ENCODE measurements at regions of chr11 and their contacts with region 1.

Region 1: DNA sequence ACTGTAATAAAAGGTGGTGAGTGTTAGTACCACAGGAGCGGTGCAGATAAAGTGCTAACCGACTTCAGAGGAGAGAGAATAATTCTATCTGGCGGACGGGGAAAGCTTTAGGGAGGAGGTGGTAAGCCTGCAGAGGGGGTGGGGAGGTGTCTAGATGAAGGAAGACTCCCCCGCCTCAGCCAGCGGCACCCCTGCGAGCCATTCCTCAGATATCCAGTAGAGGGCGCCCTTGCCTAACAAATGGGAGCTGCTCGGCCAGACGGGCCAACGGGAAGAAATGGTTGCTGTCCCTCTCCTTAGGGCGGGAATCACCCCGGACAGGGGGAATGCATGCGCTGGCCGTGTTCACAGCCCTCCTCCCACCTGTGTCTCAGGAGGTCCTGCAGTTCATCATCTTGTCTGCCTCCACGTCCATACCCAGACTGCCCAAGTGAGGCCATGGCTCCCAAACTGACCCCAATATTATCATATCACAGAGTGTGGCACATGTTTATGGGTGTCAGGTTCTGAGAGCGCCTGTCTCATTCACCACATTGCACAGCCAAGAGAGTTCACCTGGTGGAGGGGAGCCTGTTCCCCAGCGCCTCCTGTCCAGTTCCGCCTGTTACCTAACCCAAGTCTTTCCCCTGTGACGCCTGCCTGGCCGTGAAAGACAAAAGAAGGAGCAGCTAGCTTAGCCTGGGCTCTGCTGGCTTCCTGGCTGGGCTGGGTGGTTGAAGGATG is 85.5 kb downstream of the ST3GAL4 start:
- DNase-seq: peak; percentile 84
- H3K4me3 Mint-ChIP-seq: no peak overlapping the region
- H3K27ac Mint-ChIP-seq: no peak overlapping the region
- H3K4me1 Mint-ChIP-seq: peaks cover 5% of the 10 kb centered on the region
- H3K27me3 Mint-ChIP-seq: peaks cover 6% of the 10 kb centered on the region

Region 2: GRCh38 chr11:126303623-126304456 is 137.1 kb before region 1 on chr11 and contains the start of gene DCPS:
- CTCF ChIA-PET with region 1: no interaction called
- intact Hi-C with region 1: no loop called
- DNase-seq: peak; percentile 86
- H3K4me3 Mint-ChIP-seq: peak within 1 kb of the TSS; percentile 95
- H3K27ac Mint-ChIP-seq: peak within 1 kb of the TSS; percentile 97
- H3K4me1 Mint-ChIP-seq: peaks cover 35% of the 10 kb centered on the region
- H3K27me3 Mint-ChIP-seq: no peaks in the 10 kb centered on the region
- total RNA-seq, gene DCPS: 34.9 to 39.5 TPM

Region 3: GRCh38 chr11:126465573-126466188 is 24.7 kb after region 1 on chr11:
- CTCF ChIA-PET with region 1: interaction called, 11 read pairs
- intact Hi-C with region 1: no loop called
- DNase-seq: peak; percentile 78
- H3K4me3 Mint-ChIP-seq: peak overlapping the region; percentile 16
- H3K27ac Mint-ChIP-seq: peak overlapping the region; percentile 43
- H3K4me1 Mint-ChIP-seq: peaks cover 18% of the 10 kb centered on the region
- H3K27me3 Mint-ChIP-seq: no peaks in the 10 kb centered on the region

Region 4: GRCh38 chr11:126607374-126607773 is 166.4 kb after region 1 on chr11:
- CTCF ChIA-PET with region 1: no interaction called
- intact Hi-C with region 1: loop called (anchors 5 kb)
- DNase-seq: peak; percentile 32
- H3K4me3 Mint-ChIP-seq: no peak overlapping the region
- H3K27ac Mint-ChIP-seq: no peak overlapping the region
- H3K4me1 Mint-ChIP-seq: no peaks in the 10 kb centered on the region
- H3K27me3 Mint-ChIP-seq: peaks cover 29% of the 10 kb centered on the region

Region 5: GRCh38 chr11:126716456-126717083 is 275.6 kb after region 1 on chr11:
- CTCF ChIA-PET with region 1: no interaction called
- intact Hi-C with region 1: loop called (anchors 5 kb)
- DNase-seq: peak; percentile 53
- H3K4me3 Mint-ChIP-seq: no peak overlapping the region
- H3K27ac Mint-ChIP-seq: no peak overlapping the region
- H3K4me1 Mint-ChIP-seq: no peaks in the 10 kb centered on the region
- H3K27me3 Mint-ChIP-seq: peaks cover 28% of the 10 kb centered on the region

Region 6: DNA sequence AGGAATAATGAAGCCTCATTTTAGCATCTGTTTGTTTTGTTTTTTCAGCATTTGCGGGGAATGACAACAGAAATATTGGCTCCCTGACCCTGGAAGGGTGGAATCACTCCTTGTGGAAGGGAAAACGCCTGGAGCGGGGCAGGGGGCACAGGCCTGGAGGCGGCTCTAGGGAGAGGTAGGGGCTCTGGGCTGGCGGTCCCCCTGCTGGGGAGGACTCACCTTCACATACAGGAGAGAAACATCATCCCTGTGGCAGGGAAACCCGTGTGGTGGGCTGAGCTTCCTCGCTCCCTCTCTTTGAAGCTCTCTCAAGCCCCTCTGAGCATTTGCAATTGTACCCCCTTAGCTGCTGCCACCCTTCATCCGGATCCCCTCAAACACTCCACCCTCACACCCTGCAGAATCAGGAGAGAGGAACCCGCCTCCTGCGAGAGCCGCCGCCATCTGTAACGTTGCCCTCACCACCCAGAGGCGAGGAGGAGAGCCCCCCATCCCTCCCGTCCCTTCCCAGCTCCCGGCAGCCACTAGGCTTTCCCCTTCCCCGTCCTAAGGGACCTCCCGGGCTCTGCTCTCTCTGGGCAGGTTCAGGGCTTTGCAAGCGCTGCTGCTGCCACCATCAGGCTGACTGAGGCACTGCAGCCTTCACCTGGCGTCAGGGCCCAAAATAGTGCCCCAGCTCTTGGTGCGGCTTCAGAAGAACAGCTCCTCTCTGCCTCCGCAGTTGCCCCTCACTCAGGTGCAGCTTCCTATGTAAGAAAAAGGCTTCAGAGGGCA is 549.2 kb after region 1 on chr11:
- CTCF ChIA-PET with region 1: interaction called, 3 read pairs
- intact Hi-C with region 1: loop called (anchors 1 kb)
- DNase-seq: peak; percentile 67
- H3K4me3 Mint-ChIP-seq: no peak overlapping the region
- H3K27ac Mint-ChIP-seq: no peak overlapping the region
- H3K4me1 Mint-ChIP-seq: no peaks in the 10 kb centered on the region
- H3K27me3 Mint-ChIP-seq: peaks cover 14% of the 10 kb centered on the region

Region 7: DNA sequence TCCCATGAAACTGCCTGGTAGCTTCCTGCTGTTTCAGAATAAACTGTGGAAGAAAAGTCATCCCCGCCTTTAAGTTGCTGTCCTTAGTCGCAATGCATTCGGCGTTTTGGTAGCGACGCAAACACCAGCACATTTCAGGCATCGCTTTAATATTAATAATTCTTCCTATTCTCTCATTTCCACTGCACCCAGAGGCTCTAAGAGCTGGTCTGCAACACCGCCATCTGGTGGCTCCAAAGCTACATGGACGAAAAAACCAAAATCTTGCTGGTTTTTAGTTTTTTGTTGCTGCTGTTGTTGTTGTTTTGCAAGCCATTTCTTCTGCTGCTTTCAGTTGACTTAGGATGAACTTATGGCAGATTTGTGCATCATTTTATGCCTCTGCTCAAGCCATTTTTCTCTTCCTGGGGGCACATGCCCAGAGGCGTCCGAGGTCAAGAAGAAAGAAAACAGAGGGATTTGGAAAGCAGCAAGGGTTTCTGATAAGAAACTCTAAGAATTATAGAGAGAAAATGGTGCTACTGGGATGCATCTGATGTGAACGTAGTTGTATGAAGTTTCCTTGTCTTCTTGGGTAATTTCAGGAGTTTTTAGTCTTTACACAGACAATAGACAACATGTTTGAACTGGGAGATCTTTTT is 905.0 kb after region 1 on chr11:
- CTCF ChIA-PET with region 1: no interaction called
- intact Hi-C with region 1: loop called (anchors 2 kb)
- DNase-seq: peak; percentile 28
- H3K4me3 Mint-ChIP-seq: no peak overlapping the region
- H3K27ac Mint-ChIP-seq: no peak overlapping the region
- H3K4me1 Mint-ChIP-seq: no peaks in the 10 kb centered on the region
- H3K27me3 Mint-ChIP-seq: peaks cover 8% of the 10 kb centered on the region

Measured in activated naive CD4-positive, alpha-beta T cell treated with anti-CD3 and anti-CD28 coated beads for 36 hours (primary cell).